HEK293 (cell line): ENCODE measurements at regions of chr17 and their contacts with region 1.

Region 1: GRCh38 chr17:32909787-32910369 is 18.1 kb upstream of the TMEM98 start:
- H3K4me3 ChIP-seq: no peak overlapping the region
- H3K27ac ChIP-seq: no peak overlapping the region
- H3K4me1 ChIP-seq: no peaks in the 10 kb centered on the region
- CTCF ChIP-seq: peak; percentile 71; the same call in 1 of the 2 replicates

Region 2: GRCh38 chr17:32921017-32921416 is 11.1 kb after region 1 on chr17:
- CTCF ChIA-PET with region 1: interaction called, 13 read pairs
- POLR2A ChIA-PET with region 1: interaction called, 4 read pairs
- H3K4me3 ChIP-seq: no peak overlapping the region
- H3K27ac ChIP-seq: no peak overlapping the region
- H3K4me1 ChIP-seq: no peaks in the 10 kb centered on the region
- CTCF ChIP-seq: no peak

Region 3: DNA sequence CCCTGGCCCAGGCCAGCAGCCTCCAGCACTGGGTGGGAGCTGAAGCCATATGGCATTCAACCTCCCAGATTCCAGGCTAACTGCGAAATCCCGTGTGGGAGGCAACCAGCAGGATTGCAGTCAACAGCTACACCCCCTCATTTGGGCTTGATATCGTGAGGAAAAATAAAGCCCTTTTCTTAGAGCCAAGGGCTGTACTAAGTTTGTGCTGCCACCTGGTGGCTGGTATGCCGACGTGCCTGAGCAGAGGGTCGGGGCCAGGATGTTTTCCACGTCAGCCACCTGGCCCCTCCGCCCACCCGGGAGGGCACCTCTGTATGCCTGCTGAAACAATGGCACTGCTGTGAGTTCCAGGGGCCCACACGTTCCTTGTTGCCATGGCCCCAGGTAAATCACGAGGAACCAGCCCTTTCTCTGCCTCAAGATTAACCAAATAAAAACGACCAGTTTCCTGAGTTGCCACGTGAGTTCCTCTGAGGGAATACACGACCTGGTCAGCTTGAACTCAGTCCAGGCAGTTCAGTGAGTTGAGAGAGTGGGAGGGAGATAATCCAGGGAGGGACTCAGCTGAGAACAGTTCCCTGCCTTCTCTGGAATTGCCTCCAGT is 27.1 kb after region 1 on chr17:
- CTCF ChIA-PET with region 1: interaction called, 25 read pairs
- POLR2A ChIA-PET with region 1: no interaction called
- H3K4me3 ChIP-seq: no peak overlapping the region
- H3K27ac ChIP-seq: no peak overlapping the region
- H3K4me1 ChIP-seq: no peaks in the 10 kb centered on the region
- CTCF ChIP-seq: peak; percentile 57